ENCODE measurements at regions of chr20 and their contacts with region 1.

Region 1: GRCh38 chr20:684676-685319 is 9.2 kb upstream of the SCRT2 start:
- DNase-seq: no peak
- H3K4me3 ChIP-seq: no peak overlapping the region
- H3K27ac ChIP-seq: no peak overlapping the region
- H3K4me1 ChIP-seq: no peaks in the 10 kb centered on the region
- H3K27me3 ChIP-seq: peaks cover 5% of the 10 kb centered on the region
- CTCF ChIP-seq: no peak

Region 2: DNA sequence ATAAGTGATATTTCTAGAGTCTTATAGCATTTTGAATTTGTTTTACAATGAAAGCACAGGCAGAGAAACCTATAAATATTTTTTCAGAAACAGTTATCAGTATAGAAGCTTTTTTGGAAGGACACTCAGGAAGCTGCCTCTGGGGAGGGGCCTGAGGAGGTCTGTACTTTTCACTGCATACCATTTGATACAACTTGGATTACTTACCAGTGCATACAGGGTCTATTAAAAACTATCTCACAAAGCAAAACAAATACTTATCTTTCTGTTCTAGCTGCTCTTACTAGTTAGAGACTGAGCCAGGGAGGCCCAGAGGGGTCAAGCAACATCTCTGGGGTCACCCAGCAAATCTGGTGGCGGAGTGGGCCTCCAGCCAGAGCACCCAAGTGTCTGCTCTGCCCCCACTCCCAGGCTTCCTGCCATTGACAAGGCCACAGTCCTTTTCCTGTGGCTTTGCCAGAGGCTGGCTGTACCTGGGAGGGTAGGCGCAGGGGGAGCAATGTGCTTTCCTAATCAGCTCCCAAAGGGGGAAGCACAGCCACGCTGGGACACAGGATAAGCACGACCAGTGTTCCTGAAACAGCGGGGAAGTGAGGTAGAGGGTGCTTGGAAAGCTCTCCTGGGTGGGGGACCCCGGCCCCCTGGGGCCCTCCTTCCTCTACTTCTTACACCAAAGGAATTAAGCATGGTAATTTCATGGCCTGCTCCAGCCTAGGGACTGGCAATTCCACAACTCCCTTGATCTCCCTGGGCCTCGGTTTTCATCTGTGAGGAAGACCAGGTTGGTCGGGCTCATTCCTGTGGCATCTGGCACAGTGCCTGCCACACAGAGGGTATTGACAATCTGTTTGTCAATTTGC is 82.5 kb before region 1 on chr20:
- CTCF ChIA-PET with region 1: no interaction called
- dilution Hi-C with region 1: loop called (anchors 5 kb)
- in situ Hi-C with region 1: no loop called
- intact Hi-C with region 1: no loop called
- DNase-seq: no peak
- H3K4me3 ChIP-seq: no peak overlapping the region
- H3K27ac ChIP-seq: no peak overlapping the region
- H3K4me1 ChIP-seq: no peaks in the 10 kb centered on the region
- H3K27me3 ChIP-seq: peaks cover 7% of the 10 kb centered on the region
- CTCF ChIP-seq: no peak

Region 3: GRCh38 chr20:667391-667964 is 17.3 kb before region 1 on chr20:
- CTCF ChIA-PET with region 1: no interaction called
- dilution Hi-C with region 1: no loop called
- in situ Hi-C with region 1: no loop called
- intact Hi-C with region 1: no loop called
- DNase-seq: no peak
- H3K4me3 ChIP-seq: no peak overlapping the region
- H3K27ac ChIP-seq: no peak overlapping the region
- H3K4me1 ChIP-seq: peaks cover 6% of the 10 kb centered on the region
- H3K27me3 ChIP-seq: peaks cover 12% of the 10 kb centered on the region
- CTCF ChIP-seq: peak; percentile 90 to 93

Region 4: DNA sequence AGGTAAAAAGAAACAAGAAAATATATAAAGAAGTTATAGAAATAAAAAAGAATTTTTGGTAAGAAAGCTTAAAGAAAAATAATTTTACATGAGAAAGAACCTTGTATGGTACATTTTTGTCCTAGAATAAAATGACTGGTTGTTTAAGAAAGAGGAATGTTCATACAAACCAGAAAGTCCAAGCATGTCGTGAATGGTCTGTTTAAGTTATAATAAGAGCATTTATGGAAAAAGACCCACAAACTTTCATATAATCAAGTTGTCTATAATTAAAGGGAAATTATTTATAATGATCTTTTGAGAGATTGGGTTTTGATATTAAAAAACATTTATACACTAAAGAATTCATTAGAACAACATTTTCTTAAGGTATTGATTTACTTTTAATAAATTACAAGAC is 120.9 kb after region 1 on chr20:
- CTCF ChIA-PET with region 1: no interaction called
- dilution Hi-C with region 1: no loop called
- in situ Hi-C with region 1: no loop called
- intact Hi-C with region 1: no loop called
- DNase-seq: no peak
- H3K4me3 ChIP-seq: no peak overlapping the region
- H3K27ac ChIP-seq: no peak overlapping the region
- H3K4me1 ChIP-seq: no peaks in the 10 kb centered on the region
- H3K27me3 ChIP-seq: no peaks in the 10 kb centered on the region
- CTCF ChIP-seq: no peak